ENCODE measurements at regions of chr10 and their contacts with region 1.

Region 1: GRCh38 chr10:9733756-9734155 is 1283.9 kb upstream of the CELF2 start:
- DNase-seq: no peak
- ATAC-seq: no peak
- H3K4me3 ChIP-seq: no peak overlapping the region
- H3K27ac ChIP-seq: no peak overlapping the region
- H3K4me1 ChIP-seq: no peaks in the 10 kb centered on the region
- H3K27me3 ChIP-seq: no peaks in the 10 kb centered on the region
- CTCF ChIP-seq: no peak
- POLR2A ChIP-seq: no peak
- RAD21 ChIP-seq: no peak

Region 2: GRCh38 chr10:9547936-9548904 is 185.5 kb before region 1 on chr10:
- CTCF ChIA-PET with region 1: no interaction called
- POLR2A ChIA-PET with region 1: no interaction called
- dilution Hi-C with region 1: no loop called
- in situ Hi-C with region 1: no loop called
- intact Hi-C with region 1: loop called (anchors 10 kb)
- DNase-seq: no peak
- ATAC-seq: no peak; the same call in 1 of the 2 replicates
- H3K4me3 ChIP-seq: no peak overlapping the region
- H3K27ac ChIP-seq: no peak overlapping the region
- H3K4me1 ChIP-seq: no peaks in the 10 kb centered on the region; the same call in 1 of the 2 replicates
- H3K27me3 ChIP-seq: no peaks in the 10 kb centered on the region
- CTCF ChIP-seq: no peak
- POLR2A ChIP-seq: no peak
- RAD21 ChIP-seq: no peak